KBM-7 (cell line): ENCODE measurements at regions of chr15 and their contacts with region 1.

Region 1: GRCh38 chr15:58227706-58228543 is 89.7 kb downstream of the AQP9 start:
- DNase-seq: peak; percentile 84

Region 2: DNA sequence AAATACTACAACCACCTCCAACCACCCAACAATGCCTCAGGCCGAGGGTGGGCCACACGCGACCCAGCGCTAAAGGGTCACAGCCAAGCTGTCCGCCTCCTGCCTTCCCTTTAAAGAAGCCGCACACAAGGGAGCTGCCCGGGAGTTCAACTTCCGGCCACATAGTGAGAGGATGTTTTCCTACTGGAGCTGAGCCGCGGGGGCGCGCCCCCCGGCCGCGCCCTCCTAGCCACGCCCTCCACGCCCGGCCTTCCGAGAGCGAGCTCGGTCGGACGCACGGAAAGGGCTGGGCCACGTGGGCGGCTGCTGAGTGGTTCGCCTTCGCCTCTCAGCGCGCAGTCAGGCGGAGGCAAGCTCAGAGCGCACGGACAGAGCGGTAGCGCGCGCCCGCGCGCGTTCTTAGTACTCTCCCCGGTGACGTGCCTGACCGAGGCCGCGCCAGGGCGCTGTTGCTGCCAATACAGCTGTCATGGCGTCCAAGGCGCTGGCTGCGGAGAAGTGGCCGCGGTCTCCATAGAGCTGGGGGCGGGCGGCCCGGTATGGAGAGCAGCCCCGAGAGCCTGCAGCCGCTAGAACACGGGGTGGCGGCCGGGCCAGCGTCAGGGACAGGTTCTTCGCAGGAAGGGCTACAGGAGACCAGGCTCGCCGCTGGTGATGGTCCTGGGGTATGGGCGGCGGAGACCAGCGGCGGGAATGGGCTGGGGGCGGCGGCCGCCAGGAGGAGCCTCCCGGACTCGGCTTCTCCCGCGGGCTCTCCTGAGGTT is 543.1 kb after region 1 on chr15 and contains the start of gene MINDY2:
- in situ Hi-C with region 1: loop called (anchors 25 kb)
- DNase-seq: peak; percentile 99